ENCODE measurements at regions of chr7 and their contacts with region 1.

Region 1: DNA sequence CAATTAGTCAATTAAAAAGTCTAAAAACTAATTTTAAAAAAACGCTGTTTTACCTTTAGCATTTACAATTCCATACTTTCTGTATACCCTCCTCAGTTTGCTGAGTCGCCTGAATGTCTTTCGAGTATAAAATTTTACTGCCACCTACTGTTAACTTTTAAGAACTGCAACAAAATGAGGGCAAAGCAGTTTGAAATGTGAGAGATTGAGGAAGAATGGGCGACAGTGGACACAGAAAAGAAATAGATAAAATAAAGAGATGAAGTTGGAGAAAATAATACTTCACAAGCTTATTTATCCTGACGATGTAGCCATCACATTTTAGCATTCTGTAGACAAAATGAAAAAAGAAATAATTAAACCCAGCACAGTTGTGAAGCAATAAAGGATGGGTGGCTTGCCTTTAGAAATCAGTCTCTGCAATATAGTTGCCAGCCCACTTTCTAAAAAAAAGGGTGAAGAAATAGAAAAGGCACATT is 110.8 kb upstream of the PTN start:
- DNase-seq: peak; percentile 50
- H3K4me3 ChIP-seq: no peak overlapping the region
- H3K27ac ChIP-seq: no peak overlapping the region
- H3K4me1 ChIP-seq: no peaks in the 10 kb centered on the region
- H3K27me3 ChIP-seq: peaks cover 3 to 6% of the 10 kb centered on the region in 2 experiments
- CTCF ChIP-seq: peak; percentile 31 to 42
- POLR2A ChIP-seq: no peak

Region 2: DNA sequence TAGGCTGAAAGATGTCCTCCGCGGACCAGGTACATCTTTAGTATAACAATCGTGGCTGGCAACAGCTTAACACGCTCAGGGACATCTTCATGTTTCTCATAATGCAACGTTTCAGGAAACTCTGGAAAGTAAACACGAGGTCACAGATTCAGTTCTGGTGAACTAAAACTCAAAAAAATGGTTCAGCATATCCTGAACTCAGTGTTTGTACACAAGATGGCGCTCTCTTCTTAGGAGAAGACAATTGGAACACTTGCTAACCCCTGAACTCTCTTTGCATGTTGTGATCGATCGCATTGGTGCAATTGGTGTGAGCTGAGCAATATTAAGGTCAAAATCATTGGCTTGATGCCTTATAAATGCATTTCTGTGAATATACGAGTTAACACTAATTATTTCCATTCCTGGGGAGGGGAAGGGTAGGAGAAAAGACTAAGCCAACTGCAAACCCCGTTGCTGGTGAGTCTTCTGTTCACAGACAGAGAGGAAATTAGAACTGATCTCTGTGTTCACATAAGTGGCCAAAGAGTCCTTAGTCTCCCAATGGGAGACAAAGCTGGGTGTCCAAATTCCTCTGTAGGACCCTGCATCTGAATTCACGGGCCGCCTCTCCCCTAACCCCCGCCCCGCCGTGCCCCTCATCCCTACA is 1653.1 kb before region 1 on chr7:
- CTCF ChIA-PET with region 1: no interaction called
- POLR2A ChIA-PET with region 1: no interaction called
- dilution Hi-C with region 1: no loop called
- intact Hi-C with region 1: loop called (anchors 2 kb)
- DNase-seq: peak; percentile 66
- H3K4me3 ChIP-seq: no peak overlapping the region
- H3K27ac ChIP-seq: no peak overlapping the region
- H3K4me1 ChIP-seq: no peaks in the 10 kb centered on the region
- H3K27me3 ChIP-seq: peaks cover 0 to 3% of the 10 kb centered on the region in 2 experiments
- CTCF ChIP-seq: peak; percentile 63 to 70
- POLR2A ChIP-seq: no peak

Region 3: GRCh38 chr7:136114966-136115762 is 1339.1 kb before region 1 on chr7:
- CTCF ChIA-PET with region 1: interaction called, 14 read pairs
- POLR2A ChIA-PET with region 1: no interaction called
- dilution Hi-C with region 1: no loop called
- intact Hi-C with region 1: loop called (anchors 1 kb)
- DNase-seq: peak; percentile 39
- H3K4me3 ChIP-seq: no peak overlapping the region
- H3K27ac ChIP-seq: no peak overlapping the region
- H3K4me1 ChIP-seq: no peaks in the 10 kb centered on the region
- H3K27me3 ChIP-seq: no peaks in the 10 kb centered on the region
- CTCF ChIP-seq: peak; percentile 74 to 78
- POLR2A ChIP-seq: no peak

Region 4: GRCh38 chr7:136405931-136406777 is 1048.1 kb before region 1 on chr7:
- CTCF ChIA-PET with region 1: no interaction called
- POLR2A ChIA-PET with region 1: no interaction called
- dilution Hi-C with region 1: no loop called
- intact Hi-C with region 1: loop called (anchors 1 kb)
- DNase-seq: peak; percentile 48
- H3K4me3 ChIP-seq: no peak overlapping the region
- H3K27ac ChIP-seq: no peak overlapping the region
- H3K4me1 ChIP-seq: no peaks in the 10 kb centered on the region
- H3K27me3 ChIP-seq: no peaks in the 10 kb centered on the region
- CTCF ChIP-seq: peak; percentile 55 to 67
- POLR2A ChIP-seq: no peak

Region 5: GRCh38 chr7:136874238-136875032 is 579.9 kb before region 1 on chr7:
- CTCF ChIA-PET with region 1: no interaction called
- POLR2A ChIA-PET with region 1: no interaction called
- dilution Hi-C with region 1: no loop called
- intact Hi-C with region 1: loop called (anchors 10 kb)
- DNase-seq: peak; percentile 28
- H3K4me3 ChIP-seq: no peak overlapping the region
- H3K27ac ChIP-seq: no peak overlapping the region
- H3K4me1 ChIP-seq: peaks cover 6% of the 10 kb centered on the region
- H3K27me3 ChIP-seq: peaks cover 39 to 56% of the 10 kb centered on the region in 2 experiments
- CTCF ChIP-seq: peak; percentile 28 to 53
- POLR2A ChIP-seq: no peak

Region 6: DNA sequence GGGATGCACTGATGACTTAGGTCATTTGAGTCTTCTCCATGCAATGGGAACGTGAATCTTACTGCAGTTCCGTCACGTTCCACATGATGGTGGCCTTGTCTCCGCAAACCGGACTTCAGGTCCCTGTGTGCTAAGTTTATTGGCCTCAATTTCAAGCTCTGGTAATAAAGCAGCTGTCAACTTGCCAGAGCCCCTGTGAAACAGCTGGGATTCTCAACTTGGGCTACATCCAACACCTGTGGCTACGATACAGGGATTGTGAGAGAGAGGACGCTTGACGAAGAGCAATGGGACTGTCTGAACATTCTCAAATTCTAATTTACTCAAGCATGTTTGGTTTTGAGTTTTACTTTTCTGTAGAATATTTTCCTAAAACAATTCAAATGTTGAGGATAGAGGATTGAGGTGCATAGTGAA is 285.0 kb before region 1 on chr7:
- CTCF ChIA-PET with region 1: interaction called, 3 read pairs
- POLR2A ChIA-PET with region 1: no interaction called
- dilution Hi-C with region 1: no loop called
- intact Hi-C with region 1: loop called (anchors 2 kb)
- DNase-seq: peak; percentile 53
- H3K4me3 ChIP-seq: no peak overlapping the region
- H3K27ac ChIP-seq: no peak overlapping the region
- H3K4me1 ChIP-seq: no peaks in the 10 kb centered on the region
- H3K27me3 ChIP-seq: no peaks in the 10 kb centered on the region
- CTCF ChIP-seq: peak; percentile 46 to 49
- POLR2A ChIP-seq: no peak

Region 7: GRCh38 chr7:138144958-138145357 is 690.7 kb after region 1 on chr7:
- CTCF ChIA-PET with region 1: no interaction called
- POLR2A ChIA-PET with region 1: no interaction called
- dilution Hi-C with region 1: no loop called
- intact Hi-C with region 1: no loop called
- DNase-seq: no peak
- H3K4me3 ChIP-seq: no peak overlapping the region
- H3K27ac ChIP-seq: no peak overlapping the region
- H3K4me1 ChIP-seq: no peaks in the 10 kb centered on the region
- H3K27me3 ChIP-seq: no peaks in the 10 kb centered on the region
- CTCF ChIP-seq: no peak
- POLR2A ChIP-seq: no peak